ENCODE measurements at regions of chr14 and their contacts with region 1.

Region 1: GRCh38 chr14:94136575-94137331 is 7.3 kb upstream of the IFI27L2 start:
- DNase-seq: peak; percentile 15
- H3K4me3 ChIP-seq: no peak overlapping the region
- H3K27me3 ChIP-seq: peaks cover 4% of the 10 kb centered on the region
- CTCF ChIP-seq: peak; percentile 98

Region 2: DNA sequence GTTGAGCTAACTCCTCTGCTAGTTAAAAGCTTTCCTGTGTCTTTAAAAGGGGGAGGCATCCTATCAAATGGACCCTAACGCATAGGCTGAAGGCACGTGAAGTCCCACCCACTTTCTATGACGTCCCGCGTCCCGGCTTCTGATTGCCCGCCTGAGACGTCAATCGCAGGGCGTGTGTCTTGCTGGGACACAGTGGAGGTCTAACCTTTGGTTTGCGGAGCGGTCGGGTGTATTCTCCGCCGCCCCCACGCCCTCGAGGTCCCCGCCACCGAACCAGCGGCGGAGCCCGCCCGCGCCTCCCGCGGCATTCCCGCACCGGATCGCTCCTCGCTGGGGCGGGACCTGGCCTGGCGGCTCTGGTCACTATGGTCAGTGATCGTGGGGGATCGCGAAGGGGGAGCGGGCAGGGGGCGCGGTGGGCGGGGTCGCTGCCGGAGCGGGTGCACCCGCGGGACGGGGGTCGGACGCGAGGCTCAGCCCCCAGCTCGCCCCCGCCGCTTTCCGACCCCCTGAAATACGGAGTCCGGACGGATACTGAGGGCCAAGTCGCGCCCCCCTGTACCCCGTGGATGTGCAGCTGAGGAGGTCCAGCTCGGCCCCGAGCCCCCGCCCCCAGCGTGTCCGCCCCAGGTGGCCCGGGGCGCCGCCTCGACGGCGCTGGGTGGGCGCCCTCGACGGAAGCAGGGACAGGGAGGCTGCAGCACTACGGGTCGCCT is 110.4 kb before region 1 on chr14 and contains the start of gene OTUB2:
- CTCF ChIA-PET with region 1: interaction called, 248 read pairs
- POLR2A ChIA-PET with region 1: interaction called, 3 read pairs
- DNase-seq: peak; percentile 96
- H3K4me3 ChIP-seq: peak within 1 kb of the TSS; percentile 74
- H3K27me3 ChIP-seq: no peaks in the 10 kb centered on the region; the same call in 1 of the 2 replicates
- CTCF ChIP-seq: no peak
- polyA plus RNA-seq, gene OTUB2: 1.1 and 1.2 TPM in 2 replicates

Region 3: GRCh38 chr14:94051115-94051514 is 85.6 kb before region 1 on chr14:
- CTCF ChIA-PET with region 1: interaction called, 51 read pairs
- POLR2A ChIA-PET with region 1: no interaction called
- DNase-seq: no peak
- H3K4me3 ChIP-seq: no peak overlapping the region
- H3K27me3 ChIP-seq: no peaks in the 10 kb centered on the region
- CTCF ChIP-seq: peak; percentile 52

Region 4: GRCh38 chr14:94062344-94062940 is 74.3 kb before region 1 on chr14:
- CTCF ChIA-PET with region 1: interaction called, 14 read pairs
- POLR2A ChIA-PET with region 1: no interaction called
- DNase-seq: no peak
- H3K4me3 ChIP-seq: no peak overlapping the region
- H3K27me3 ChIP-seq: no peaks in the 10 kb centered on the region
- CTCF ChIP-seq: no peak

Region 5: DNA sequence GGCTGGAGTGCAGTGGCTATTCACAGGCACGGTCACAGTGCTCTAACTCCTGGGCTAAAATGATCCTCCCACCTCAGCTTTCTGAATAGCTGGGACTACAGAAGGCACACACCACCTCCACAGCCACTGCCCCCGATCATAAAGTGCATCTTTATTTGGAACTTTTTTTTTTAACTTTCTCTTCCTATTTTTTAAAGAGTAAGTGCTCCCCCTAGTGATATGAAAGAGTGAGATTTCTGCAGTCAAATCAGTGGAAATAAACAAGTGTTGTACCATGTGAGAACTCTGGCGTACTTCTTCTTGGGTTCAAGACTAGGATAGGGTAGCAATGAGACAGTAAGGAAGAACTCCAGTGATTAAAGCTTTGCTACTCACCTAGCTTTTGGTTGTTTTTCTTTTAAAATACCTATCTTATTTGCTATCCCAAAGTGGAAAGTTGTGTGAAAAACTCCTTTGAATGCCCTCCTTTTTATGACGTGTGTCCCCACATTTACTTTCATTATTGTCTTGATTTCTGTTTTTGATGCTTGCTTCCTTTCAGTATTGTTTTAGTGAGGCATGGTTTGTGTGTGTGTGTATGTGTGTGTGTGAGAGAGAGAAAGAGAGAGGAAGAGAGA is 44.0 kb after region 1 on chr14:
- CTCF ChIA-PET with region 1: interaction called, 19 read pairs
- POLR2A ChIA-PET with region 1: no interaction called
- DNase-seq: no peak
- H3K4me3 ChIP-seq: no peak overlapping the region
- H3K27me3 ChIP-seq: peaks cover 1% of the 10 kb centered on the region; the same call in 1 of the 2 replicates
- CTCF ChIP-seq: peak; percentile 59

Measured in BJ (cell line).